ENCODE measurements at regions of chr11 and their contacts with region 1.

Region 1: DNA sequence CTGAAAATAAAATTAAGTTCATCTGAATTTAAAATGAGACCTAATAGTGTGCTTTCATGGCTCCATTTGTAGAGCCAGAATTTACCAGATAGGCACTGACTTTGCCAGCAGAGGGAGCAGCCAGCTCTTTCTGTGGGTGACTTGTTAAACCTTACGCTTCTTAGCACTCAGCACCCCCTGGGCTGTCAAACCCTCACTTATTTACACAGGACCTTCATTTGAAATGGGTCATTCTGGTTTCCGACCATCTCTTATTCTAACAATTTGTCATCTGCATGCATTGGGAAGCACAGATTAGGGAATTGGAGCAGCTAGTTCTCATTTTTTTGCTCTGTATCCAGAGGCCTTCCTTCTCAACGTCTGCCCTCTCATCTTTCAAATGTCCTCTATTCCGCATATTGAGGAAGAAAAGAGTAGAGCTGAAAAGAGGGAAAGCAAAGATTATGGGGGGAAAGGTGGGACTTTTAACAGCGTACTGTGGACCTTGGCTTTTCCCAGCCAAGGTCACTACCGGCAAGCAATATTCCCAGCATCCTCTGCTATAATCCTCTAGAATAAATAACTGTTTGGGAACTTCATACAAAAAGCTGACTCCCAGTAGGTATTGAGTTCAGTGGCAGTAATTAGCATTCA is 3.1 kb downstream of the ASRGL1 start:
- DNase-seq: peak; percentile 45
- ATAC-seq: peak; percentile 73
- H3K4me3 ChIP-seq: no peak overlapping the region
- H3K27ac ChIP-seq: no peak overlapping the region
- H3K4me1 ChIP-seq: no peaks in the 10 kb centered on the region
- H3K27me3 ChIP-seq: peaks cover 27% of the 10 kb centered on the region
- CTCF ChIP-seq: peak; percentile 58
- POLR2A ChIP-seq: no peak
- RAD21 ChIP-seq: peak; percentile 37

Region 2: DNA sequence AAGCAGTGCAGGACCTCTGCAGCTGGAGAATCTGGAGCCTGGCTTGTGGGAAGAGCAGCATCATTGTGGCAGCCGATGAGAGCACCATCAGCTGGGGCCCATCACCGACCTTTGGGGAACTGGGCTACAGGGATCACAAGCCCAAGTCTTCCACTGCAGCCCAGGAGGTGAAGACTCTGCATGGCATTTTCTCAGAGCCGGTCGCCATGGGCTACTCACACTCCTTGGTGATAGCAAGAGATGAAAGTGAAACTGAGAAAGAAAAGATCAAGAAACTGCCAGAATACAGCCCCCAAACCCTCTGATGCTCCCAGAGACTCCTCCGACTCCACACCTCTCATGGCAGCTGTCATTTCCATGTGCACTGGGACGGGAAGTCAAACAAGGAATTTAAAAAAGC is 32.5 kb after region 1 on chr11:
- CTCF ChIA-PET with region 1: interaction called, 8 read pairs
- POLR2A ChIA-PET with region 1: no interaction called
- dilution Hi-C with region 1: no loop called
- in situ Hi-C with region 1: no loop called
- intact Hi-C with region 1: loop called (anchors 1 kb)
- DNase-seq: no peak
- ATAC-seq: no peak
- H3K4me3 ChIP-seq: no peak overlapping the region
- H3K27ac ChIP-seq: no peak overlapping the region
- H3K4me1 ChIP-seq: no peaks in the 10 kb centered on the region
- H3K27me3 ChIP-seq: peaks cover 14% of the 10 kb centered on the region
- CTCF ChIP-seq: no peak
- POLR2A ChIP-seq: no peak
- RAD21 ChIP-seq: no peak

Region 3: DNA sequence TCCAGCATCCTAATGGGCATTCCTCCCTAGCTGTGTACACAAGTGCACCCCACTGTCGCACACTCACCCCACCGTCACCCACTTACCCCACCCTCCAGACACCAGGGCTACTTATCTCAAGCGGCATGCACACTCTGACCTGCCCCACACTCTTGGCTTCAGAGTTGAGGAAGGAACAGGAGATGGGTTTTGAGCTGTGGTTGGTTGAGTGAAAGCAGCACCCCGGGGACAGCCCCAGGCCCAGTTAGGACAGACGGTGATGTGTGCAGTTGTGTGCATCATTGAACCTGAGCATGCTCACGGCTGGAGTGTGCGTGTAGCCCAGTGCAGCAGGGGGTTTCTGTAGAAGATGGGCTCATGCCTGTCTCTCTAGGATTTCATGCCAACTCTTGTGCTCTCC is 173.8 kb after region 1 on chr11:
- CTCF ChIA-PET with region 1: no interaction called
- POLR2A ChIA-PET with region 1: no interaction called
- dilution Hi-C with region 1: no loop called
- in situ Hi-C with region 1: no loop called
- intact Hi-C with region 1: no loop called
- DNase-seq: no peak
- ATAC-seq: peak; percentile 21; the same call in 1 of the 2 replicates
- H3K4me3 ChIP-seq: no peak overlapping the region
- H3K27ac ChIP-seq: no peak overlapping the region
- H3K4me1 ChIP-seq: no peaks in the 10 kb centered on the region
- H3K27me3 ChIP-seq: no peaks in the 10 kb centered on the region
- CTCF ChIP-seq: no peak
- POLR2A ChIP-seq: no peak
- RAD21 ChIP-seq: no peak

Measured in IMR-90 (cell line).